ENCODE measurements at regions of chr18 and their contacts with region 1.

Region 1: DNA sequence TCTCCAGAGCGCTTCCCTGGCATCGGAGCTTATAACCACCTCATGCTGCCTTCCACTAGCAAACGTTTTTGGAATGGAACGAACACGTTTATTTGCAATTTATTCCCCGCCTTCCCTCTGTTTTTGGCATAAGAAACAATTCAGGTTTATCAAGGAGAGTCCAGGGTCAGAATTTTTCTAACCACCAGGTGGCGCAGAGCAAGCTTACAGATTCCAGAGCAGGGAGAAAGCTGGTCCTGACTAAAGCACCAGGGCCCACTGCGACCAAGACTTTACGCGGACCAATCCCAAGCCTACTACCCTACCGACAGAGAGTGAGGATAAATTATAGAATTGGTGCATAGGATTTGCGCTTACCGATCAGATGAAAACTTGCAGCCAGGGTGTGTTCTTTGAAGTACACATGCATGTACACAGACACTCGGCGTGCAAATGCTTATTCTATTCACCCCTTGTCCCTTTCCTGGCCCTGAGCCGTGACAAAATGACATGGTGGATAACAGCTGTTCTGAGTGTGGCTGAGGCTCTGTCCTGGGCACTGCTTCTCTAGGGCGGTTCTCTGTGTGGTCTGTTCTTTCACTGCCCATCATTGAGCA is 34.7 kb downstream of the NAPG start:
- H3K4me3 Mint-ChIP-seq: no peak overlapping the region
- H3K27ac Mint-ChIP-seq: no peak overlapping the region
- H3K4me1 Mint-ChIP-seq: peaks cover 14% of the 10 kb centered on the region
- H3K27me3 Mint-ChIP-seq: peaks cover 1% of the 10 kb centered on the region

Region 2: DNA sequence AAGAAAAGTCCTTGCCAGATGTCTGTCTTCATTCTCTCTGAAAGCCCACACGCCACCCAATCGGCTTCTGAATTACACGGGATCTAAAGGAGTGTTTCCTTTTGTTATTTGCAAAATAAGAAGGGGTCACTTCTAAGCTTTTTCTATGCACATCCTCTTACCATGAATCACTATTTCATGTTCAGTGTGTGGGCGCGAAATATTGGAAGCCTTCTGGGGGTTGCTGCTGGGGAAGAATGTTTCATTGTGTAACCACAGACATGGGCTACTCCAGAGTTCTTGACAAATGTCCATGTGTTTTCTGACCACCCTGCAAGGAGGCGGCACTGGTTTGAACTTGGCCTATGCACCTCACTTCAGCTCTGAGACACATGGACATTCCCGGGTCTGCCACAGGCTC is 239.8 kb before region 1 on chr18:
- intact Hi-C with region 1: no loop called
- H3K4me3 Mint-ChIP-seq: no peak overlapping the region
- H3K27ac Mint-ChIP-seq: no peak overlapping the region
- H3K4me1 Mint-ChIP-seq: peaks cover 42% of the 10 kb centered on the region
- H3K27me3 Mint-ChIP-seq: no peaks in the 10 kb centered on the region

Region 3: GRCh38 chr18:10518595-10519255 is 41.8 kb before region 1 on chr18:
- intact Hi-C with region 1: no loop called
- H3K4me3 Mint-ChIP-seq: no peak overlapping the region
- H3K27ac Mint-ChIP-seq: peak overlapping the region; percentile 34
- H3K4me1 Mint-ChIP-seq: peaks cover 37% of the 10 kb centered on the region
- H3K27me3 Mint-ChIP-seq: peaks cover 5% of the 10 kb centered on the region

Region 4: GRCh38 chr18:10787293-10787901 is 226.8 kb after region 1 on chr18:
- intact Hi-C with region 1: loop called (anchors 10 kb)
- H3K4me3 Mint-ChIP-seq: no peak overlapping the region
- H3K27ac Mint-ChIP-seq: no peak overlapping the region
- H3K4me1 Mint-ChIP-seq: peaks cover 27% of the 10 kb centered on the region
- H3K27me3 Mint-ChIP-seq: peaks cover 8% of the 10 kb centered on the region

Region 5: DNA sequence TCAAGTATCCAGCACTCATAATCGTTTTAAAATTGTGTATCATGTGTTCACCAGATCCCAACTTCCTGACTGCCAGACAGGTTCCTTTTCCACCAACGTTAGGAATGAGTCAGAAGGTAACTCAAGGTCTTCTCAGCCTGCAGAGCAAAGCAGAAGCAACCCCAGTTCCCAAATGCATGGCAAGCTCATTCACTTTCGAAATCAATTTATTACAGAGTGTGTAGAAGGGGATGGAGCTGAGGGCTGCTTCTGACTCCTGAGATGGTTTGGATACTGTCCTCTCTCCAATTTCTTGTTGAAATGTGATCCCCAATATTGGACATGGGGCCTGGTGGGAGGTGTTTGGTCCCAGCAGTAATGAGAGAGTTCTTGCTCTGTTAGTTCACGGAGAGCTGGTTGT is 474.3 kb after region 1 on chr18:
- intact Hi-C with region 1: loop called (anchors 10 kb)
- H3K4me3 Mint-ChIP-seq: no peak overlapping the region
- H3K27ac Mint-ChIP-seq: no peak overlapping the region
- H3K4me1 Mint-ChIP-seq: peaks cover 11% of the 10 kb centered on the region
- H3K27me3 Mint-ChIP-seq: no peaks in the 10 kb centered on the region

Region 6: DNA sequence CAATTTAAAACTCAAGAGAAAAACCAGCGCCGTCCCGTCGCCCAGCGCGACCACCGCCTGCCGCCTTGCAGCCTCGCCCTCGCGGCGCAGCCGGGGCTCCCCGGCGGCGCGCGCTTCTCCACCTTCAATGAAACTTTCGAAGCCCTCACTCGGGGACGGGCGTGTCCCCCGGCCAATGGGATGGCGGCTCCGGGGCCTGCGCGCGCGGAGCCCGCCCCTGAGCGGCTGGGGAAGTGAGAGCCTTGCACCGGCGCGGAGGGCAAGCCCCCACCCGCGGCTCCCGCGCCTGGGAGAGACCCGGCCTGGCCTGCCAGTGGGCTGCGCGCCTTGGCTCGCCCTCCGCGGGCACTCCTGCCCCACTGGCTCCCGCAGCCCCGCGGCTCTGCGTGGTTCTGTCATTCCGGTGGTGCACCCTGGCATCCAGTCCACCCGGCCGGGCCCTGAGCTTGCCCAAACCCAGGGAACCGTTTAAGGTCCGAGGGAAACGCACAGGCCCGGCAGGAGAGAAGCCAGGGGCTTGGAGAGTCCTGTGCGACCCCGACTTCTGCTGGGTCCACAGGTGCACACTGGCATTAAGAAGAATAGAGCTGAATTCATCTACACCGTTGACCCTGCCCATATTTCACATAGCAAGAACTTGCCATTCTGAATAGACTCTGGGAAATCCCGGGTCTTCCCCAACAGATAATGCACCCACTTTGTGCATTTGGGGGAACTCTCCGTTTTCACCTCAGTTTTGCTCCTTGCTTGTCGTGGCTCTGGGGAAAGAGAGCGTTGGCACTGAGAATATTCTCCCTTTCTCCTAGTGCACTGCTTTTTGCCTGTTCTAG is 589.1 kb after region 1 on chr18 and contains the start of gene PIEZO2:
- intact Hi-C with region 1: loop called (anchors 1 kb)
- H3K4me3 Mint-ChIP-seq: peak within 1 kb of the TSS; percentile 64
- H3K27ac Mint-ChIP-seq: no peak within 1 kb of the TSS
- H3K4me1 Mint-ChIP-seq: peaks cover 7% of the 10 kb centered on the region
- H3K27me3 Mint-ChIP-seq: peaks cover 63% of the 10 kb centered on the region